ENCODE measurements at regions of chr2 and their contacts with region 1.

Region 1: DNA sequence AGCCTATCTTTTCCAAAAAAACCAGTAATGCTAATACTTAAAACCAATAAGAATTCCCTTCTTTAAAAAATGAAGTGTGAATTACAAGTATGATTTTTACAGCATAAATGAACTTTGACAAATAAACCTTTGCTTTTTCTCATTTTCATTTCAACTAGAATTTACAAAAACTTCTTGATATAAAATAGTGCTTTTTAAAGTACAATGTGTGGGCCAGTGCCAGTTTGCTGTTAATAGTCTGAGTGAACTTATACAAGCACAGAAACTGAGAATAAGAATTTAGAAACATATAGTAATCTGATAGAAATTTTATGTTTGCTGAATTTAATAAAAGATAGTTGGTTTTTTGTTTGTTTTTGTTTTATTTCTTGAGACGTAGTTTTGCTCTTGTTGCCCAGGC is 43.7 kb upstream of the CHRNA1 start:
- DNase-seq: no peak
- H3K4me3 ChIP-seq: no peak overlapping the region
- H3K27ac ChIP-seq: no peak overlapping the region
- H3K4me1 ChIP-seq: no peaks in the 10 kb centered on the region
- H3K27me3 ChIP-seq: no peaks in the 10 kb centered on the region
- CTCF ChIP-seq: no peak

Region 2: DNA sequence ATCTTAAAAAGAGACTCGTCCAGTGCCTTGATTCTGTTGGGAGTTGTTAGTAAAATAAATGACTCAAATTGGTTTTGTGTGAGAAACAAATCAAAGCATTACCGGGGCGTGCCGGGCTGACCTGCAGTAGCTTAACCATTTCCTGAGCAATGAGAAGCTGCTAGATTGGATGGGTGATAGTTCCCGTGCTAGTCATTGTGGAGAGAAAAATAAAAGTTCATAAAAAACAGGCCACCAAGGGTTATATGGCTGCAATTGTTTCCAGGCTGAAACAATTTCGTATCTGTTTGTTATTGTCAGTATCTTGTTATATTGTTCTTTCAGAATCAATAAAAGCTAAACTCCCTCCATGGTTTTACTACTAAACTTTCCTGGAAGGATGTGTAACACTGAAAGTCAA is 1775.7 kb after region 1 on chr2:
- CTCF ChIA-PET with region 1: interaction called, 18 read pairs
- POLR2A ChIA-PET with region 1: no interaction called
- intact Hi-C with region 1: no loop called
- DNase-seq: peak; percentile 46
- H3K4me3 ChIP-seq: peak overlapping the region; percentile 7
- H3K27ac ChIP-seq: peak overlapping the region; percentile 17
- H3K4me1 ChIP-seq: peaks cover 24% of the 10 kb centered on the region
- H3K27me3 ChIP-seq: no peaks in the 10 kb centered on the region
- CTCF ChIP-seq: no peak

Measured in A673 (cell line).